ENCODE measurements at regions of chr12 and their contacts with region 1.

Region 1: GRCh38 chr12:85920324-85920947 is 46.3 kb downstream of the NTS start:
- DNase-seq: no peak
- ATAC-seq: no peak
- H3K4me3 ChIP-seq: no peak overlapping the region
- H3K27ac ChIP-seq: no peak overlapping the region
- H3K4me1 ChIP-seq: no peaks in the 10 kb centered on the region
- H3K27me3 ChIP-seq: no peaks in the 10 kb centered on the region
- CTCF ChIP-seq: peak; percentile 59; the same call in 1 of the 2 replicates

Region 2: DNA sequence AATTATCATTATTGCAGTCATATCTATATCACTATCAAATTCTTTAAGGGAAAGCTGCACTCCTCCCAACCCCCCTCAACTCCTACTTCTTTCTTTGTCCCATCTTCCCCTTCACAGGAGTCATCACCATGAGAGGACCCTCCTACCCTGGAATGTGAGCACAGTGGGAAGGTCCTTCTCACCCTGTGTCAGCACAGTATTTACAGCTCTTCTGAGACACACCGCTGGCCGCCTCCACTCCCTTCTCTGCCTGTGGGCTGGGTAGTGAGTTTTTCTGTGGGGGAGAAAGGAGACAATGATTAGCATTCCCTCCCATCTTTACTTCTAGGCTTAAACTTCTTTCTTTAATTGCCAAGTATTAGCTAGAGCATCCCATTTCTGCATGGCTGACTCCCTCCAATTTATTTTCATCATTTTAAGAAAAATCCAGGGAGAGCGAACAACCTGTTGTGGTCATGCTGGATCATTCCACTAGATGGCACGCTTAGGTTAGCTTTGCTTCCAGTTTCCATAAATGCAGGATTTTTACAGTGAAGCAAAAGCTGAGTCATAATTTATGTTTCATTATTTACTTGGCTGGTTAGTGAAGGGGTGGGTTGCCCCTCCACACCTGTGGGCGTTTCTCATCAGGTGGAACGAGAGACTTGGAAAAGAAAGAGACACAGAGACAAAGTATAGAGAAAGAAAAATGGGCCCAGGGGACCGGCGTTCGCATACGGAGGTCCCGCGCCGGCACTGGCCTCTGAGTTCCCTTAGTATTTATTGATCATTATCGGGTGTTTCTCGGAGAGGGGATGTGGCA is 451.9 kb before region 1 on chr12:
- CTCF ChIA-PET with region 1: interaction called, 3 read pairs
- POLR2A ChIA-PET with region 1: no interaction called
- in situ Hi-C with region 1: no loop called
- intact Hi-C with region 1: loop called (anchors 2 kb)
- DNase-seq: peak; percentile 22
- ATAC-seq: no peak
- H3K4me3 ChIP-seq: peak overlapping the region in 1 of 2 experiments; percentile 5; a peak in 1 of 4 replicates
- H3K27ac ChIP-seq: no peak overlapping the region
- H3K4me1 ChIP-seq: no peaks in the 10 kb centered on the region
- H3K27me3 ChIP-seq: no peaks in the 10 kb centered on the region
- CTCF ChIP-seq: peak; percentile 80

Region 3: DNA sequence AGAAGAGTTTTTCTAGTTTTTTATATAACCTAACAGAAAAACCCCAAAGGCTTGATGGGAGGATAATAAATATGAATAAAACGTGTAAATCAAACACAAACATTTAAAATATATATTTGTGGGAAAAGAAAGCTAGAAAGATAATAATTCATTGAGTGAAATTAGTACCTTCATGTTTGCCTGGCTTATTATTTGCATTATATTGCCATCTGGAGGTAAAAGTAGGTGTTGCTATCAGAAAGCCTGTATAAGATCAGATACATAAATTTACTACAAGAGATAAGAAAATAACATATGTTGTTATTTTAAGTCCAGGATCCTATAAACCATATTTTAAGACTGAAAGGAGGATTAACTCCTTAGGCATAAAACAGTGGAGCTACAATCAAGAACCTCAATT is 31.4 kb after region 1 on chr12:
- CTCF ChIA-PET with region 1: no interaction called
- POLR2A ChIA-PET with region 1: no interaction called
- in situ Hi-C with region 1: no loop called
- intact Hi-C with region 1: loop called (anchors 2 kb)
- DNase-seq: peak; percentile 10
- ATAC-seq: no peak
- H3K4me3 ChIP-seq: no peak overlapping the region
- H3K27ac ChIP-seq: no peak overlapping the region
- H3K4me1 ChIP-seq: no peaks in the 10 kb centered on the region; the same call in 1 of the 2 replicates
- H3K27me3 ChIP-seq: no peaks in the 10 kb centered on the region
- CTCF ChIP-seq: peak; percentile 29; the same call in 1 of the 2 replicates

Region 4: GRCh38 chr12:86193931-86194330 is 273.5 kb after region 1 on chr12:
- CTCF ChIA-PET with region 1: no interaction called
- POLR2A ChIA-PET with region 1: no interaction called
- in situ Hi-C with region 1: no loop called
- intact Hi-C with region 1: no loop called
- DNase-seq: no peak
- ATAC-seq: no peak
- H3K4me3 ChIP-seq: no peak overlapping the region
- H3K27ac ChIP-seq: no peak overlapping the region
- H3K4me1 ChIP-seq: no peaks in the 10 kb centered on the region
- H3K27me3 ChIP-seq: no peaks in the 10 kb centered on the region
- CTCF ChIP-seq: no peak

Measured in Panc1 (cell line).